ENCODE measurements at regions of chr3 and their contacts with region 1.

Region 1: GRCh38 chr3:142279965-142280590 is 54.7 kb upstream of the GK5 start:
- DNase-seq: peak in 8 of 9 donors; percentile 18 to 64 (median 44)
- ATAC-seq: peak; percentile 71
- H3K4me3 ChIP-seq: no peak overlapping the region
- H3K4me3 Mint-ChIP-seq: no peak overlapping the region
- H3K27ac ChIP-seq: no peak overlapping the region
- H3K27ac Mint-ChIP-seq: no peak overlapping the region
- H3K4me1 ChIP-seq: peaks cover 0 to 8% of the 10 kb centered on the region in 2 donors
- H3K4me1 Mint-ChIP-seq: peaks cover 0 to 23% (median 0%) of the 10 kb centered on the region in 7 donors
- H3K27me3 ChIP-seq: no peaks in the 10 kb centered on the region
- H3K27me3 Mint-ChIP-seq: no peaks in the 10 kb centered on the region

Region 2: DNA sequence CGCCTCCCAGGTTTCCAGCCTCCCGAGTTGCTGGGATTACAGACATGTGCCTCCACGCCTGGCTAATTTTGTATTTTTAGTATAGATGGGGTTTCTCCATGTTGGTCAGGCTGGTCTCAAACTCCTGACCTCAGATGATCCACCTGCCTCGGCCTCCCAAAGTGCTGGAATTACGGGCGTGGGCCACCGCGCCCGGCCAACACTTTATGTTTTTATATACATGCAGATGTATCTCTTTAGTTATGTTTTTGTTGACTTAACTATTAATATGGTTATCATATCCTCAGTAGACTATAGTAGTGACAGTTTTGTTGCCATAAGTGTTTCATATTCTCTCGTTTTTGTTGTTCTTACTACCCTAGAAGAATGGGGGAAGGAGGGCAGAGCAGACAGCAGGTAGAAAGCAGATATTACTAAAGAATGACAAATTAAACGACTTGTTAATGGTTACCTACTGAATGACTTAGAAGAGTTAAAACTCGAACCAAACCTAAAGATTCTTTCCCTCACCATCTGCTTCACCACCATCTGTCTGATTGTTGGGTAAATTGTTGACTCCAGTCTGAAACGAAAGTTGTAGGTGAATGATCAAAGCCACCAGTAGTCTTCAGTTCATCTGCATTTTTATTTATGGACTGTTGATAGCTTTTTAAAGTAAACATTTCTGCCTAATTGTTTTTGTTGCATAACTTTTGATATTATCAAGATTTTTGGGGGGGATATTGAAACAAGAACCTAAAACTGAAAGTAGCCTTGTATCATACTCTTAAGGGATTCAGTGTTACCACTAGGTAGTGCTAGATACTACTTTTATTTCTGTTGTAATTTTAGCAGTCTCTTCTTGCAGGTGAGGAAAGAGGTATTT is 704.0 kb before region 1 on chr3:
- CTCF ChIA-PET with region 1: interaction called, 4 read pairs
- POLR2A ChIA-PET with region 1: no interaction called
- intact Hi-C with region 1: loop called in 1 of 2 experiments (anchors 1 kb)
- DNase-seq: peak in 4 of 9 donors; percentile 14 to 44 (median 41)
- ATAC-seq: peak; percentile 82
- H3K4me3 ChIP-seq: no peak overlapping the region
- H3K4me3 Mint-ChIP-seq: peak overlapping the region in 8 of 10 donors; percentile 7 to 64 (median 48)
- H3K27ac ChIP-seq: peak overlapping the region; percentile 47
- H3K27ac Mint-ChIP-seq: peak overlapping the region; percentile 36 to 88 (median 69)
- H3K4me1 ChIP-seq: no peaks in the 10 kb centered on the region
- H3K4me1 Mint-ChIP-seq: peaks cover 8 to 17% (median 12%) of the 10 kb centered on the region in 7 donors
- H3K27me3 ChIP-seq: no peaks in the 10 kb centered on the region
- H3K27me3 Mint-ChIP-seq: no peaks in the 10 kb centered on the region

Region 3: DNA sequence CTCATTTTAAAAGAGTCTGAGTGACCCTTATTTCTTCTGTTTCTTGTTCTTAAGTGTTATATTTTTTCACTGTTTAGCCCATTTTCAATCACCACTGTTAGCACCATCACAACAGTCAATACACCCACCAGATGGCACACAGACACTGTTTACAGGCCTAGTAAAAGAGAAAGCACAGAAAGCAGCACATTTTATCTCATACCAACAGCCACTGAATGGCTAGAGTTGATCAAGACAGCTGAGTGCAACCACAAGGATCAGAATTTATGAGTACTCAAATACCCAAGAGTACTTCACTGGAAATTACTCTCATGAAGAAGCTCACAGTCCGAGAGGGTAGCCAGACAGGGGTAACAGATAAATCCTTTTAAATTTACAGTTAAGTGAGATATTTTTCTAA is 257.7 kb before region 1 on chr3:
- CTCF ChIA-PET with region 1: no interaction called
- POLR2A ChIA-PET with region 1: no interaction called
- intact Hi-C with region 1: loop called (anchors 1 to 5 kb)
- DNase-seq: peak in 2 of 9 donors; percentile 11
- ATAC-seq: peak; percentile 70
- H3K4me3 ChIP-seq: no peak overlapping the region
- H3K4me3 Mint-ChIP-seq: no peak overlapping the region
- H3K27ac ChIP-seq: no peak overlapping the region
- H3K27ac Mint-ChIP-seq: no peak overlapping the region
- H3K4me1 ChIP-seq: no peaks in the 10 kb centered on the region
- H3K4me1 Mint-ChIP-seq: peaks cover 18 to 52% (median 44%) of the 10 kb centered on the region in 7 donors
- H3K27me3 ChIP-seq: no peaks in the 10 kb centered on the region
- H3K27me3 Mint-ChIP-seq: no peaks in the 10 kb centered on the region

Region 4: GRCh38 chr3:142124243-142124642 is 155.8 kb before region 1 on chr3:
- CTCF ChIA-PET with region 1: interaction called, 30 read pairs
- POLR2A ChIA-PET with region 1: no interaction called
- intact Hi-C with region 1: loop called in 1 of 2 experiments (anchors 1 kb)
- DNase-seq: no peak
- ATAC-seq: no peak
- H3K4me3 ChIP-seq: no peak overlapping the region
- H3K4me3 Mint-ChIP-seq: no peak overlapping the region
- H3K27ac ChIP-seq: no peak overlapping the region
- H3K27ac Mint-ChIP-seq: no peak overlapping the region
- H3K4me1 ChIP-seq: no peaks in the 10 kb centered on the region
- H3K4me1 Mint-ChIP-seq: peaks cover 3 to 23% (median 9%) of the 10 kb centered on the region in 7 donors
- H3K27me3 ChIP-seq: no peaks in the 10 kb centered on the region
- H3K27me3 Mint-ChIP-seq: no peaks in the 10 kb centered on the region

Region 5: GRCh38 chr3:142152384-142152783 is 127.7 kb before region 1 on chr3:
- CTCF ChIA-PET with region 1: no interaction called
- POLR2A ChIA-PET with region 1: no interaction called
- intact Hi-C with region 1: no loop called
- DNase-seq: no peak
- ATAC-seq: no peak
- H3K4me3 ChIP-seq: no peak overlapping the region
- H3K4me3 Mint-ChIP-seq: no peak overlapping the region
- H3K27ac ChIP-seq: no peak overlapping the region
- H3K27ac Mint-ChIP-seq: no peak overlapping the region
- H3K4me1 ChIP-seq: peaks cover 0 to 10% of the 10 kb centered on the region in 2 donors
- H3K4me1 Mint-ChIP-seq: peaks cover 12 to 27% (median 13%) of the 10 kb centered on the region in 7 donors
- H3K27me3 ChIP-seq: no peaks in the 10 kb centered on the region
- H3K27me3 Mint-ChIP-seq: peaks cover 0 to 16% (median 0%) of the 10 kb centered on the region in 5 donors

Region 6: DNA sequence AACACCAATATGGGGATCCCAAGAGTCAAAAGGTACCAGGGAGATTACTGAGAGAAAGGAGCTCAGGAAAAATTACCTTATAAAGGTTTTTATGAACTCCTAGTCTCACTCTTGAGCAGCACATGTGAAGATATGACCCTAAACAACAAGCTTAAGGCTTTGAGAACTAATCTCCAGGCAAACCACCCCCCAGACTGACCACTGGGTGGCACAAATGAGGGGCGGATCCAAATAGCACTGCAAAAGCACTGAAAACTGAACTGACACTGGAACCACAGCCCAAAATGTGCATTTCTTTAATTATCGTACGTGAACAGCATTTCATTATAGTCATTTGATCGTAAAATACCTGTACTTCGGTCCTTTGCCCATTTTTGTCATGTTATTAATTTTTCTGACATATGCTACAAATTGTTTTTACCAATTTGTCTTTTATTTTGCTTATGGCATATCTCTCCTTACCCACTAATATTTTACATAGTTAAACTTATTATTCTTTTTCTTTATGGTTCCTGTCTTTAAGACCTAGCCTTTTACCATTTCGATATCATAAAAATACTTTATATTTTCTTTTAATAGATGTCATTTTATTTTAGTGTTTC is 99.2 kb before region 1 on chr3:
- CTCF ChIA-PET with region 1: interaction called, 3 read pairs
- POLR2A ChIA-PET with region 1: no interaction called
- intact Hi-C with region 1: loop called (anchors 1 to 2 kb)
- DNase-seq: peak in 1 of 9 donors; percentile 1
- ATAC-seq: peak; percentile 53
- H3K4me3 ChIP-seq: no peak overlapping the region
- H3K4me3 Mint-ChIP-seq: no peak overlapping the region
- H3K27ac ChIP-seq: no peak overlapping the region
- H3K27ac Mint-ChIP-seq: no peak overlapping the region
- H3K4me1 ChIP-seq: no peaks in the 10 kb centered on the region
- H3K4me1 Mint-ChIP-seq: no peaks in the 10 kb centered on the region
- H3K27me3 ChIP-seq: no peaks in the 10 kb centered on the region
- H3K27me3 Mint-ChIP-seq: no peaks in the 10 kb centered on the region

Region 7: GRCh38 chr3:142374687-142375086 is 94.6 kb after region 1 on chr3:
- CTCF ChIA-PET with region 1: no interaction called
- POLR2A ChIA-PET with region 1: no interaction called
- intact Hi-C with region 1: no loop called
- DNase-seq: no peak
- ATAC-seq: no peak
- H3K4me3 ChIP-seq: no peak overlapping the region
- H3K4me3 Mint-ChIP-seq: no peak overlapping the region
- H3K27ac ChIP-seq: no peak overlapping the region
- H3K27ac Mint-ChIP-seq: peak overlapping the region in 3 of 9 donors; percentile 15 to 50 (median 20)
- H3K4me1 ChIP-seq: no peaks in the 10 kb centered on the region
- H3K4me1 Mint-ChIP-seq: peaks cover 0 to 10% (median 0%) of the 10 kb centered on the region in 7 donors
- H3K27me3 ChIP-seq: no peaks in the 10 kb centered on the region
- H3K27me3 Mint-ChIP-seq: no peaks in the 10 kb centered on the region